PC-3 (cell line): ENCODE measurements at regions of chr10 and their contacts with region 1.

Region 1: GRCh38 chr10:22042557-22043326 is 39.2 kb upstream of the DNAJC1 start:
- DNase-seq: no peak
- ATAC-seq: no peak
- H3K4me3 ChIP-seq: no peak overlapping the region
- H3K27ac ChIP-seq: no peak overlapping the region
- H3K4me1 ChIP-seq: no peaks in the 10 kb centered on the region
- H3K27me3 ChIP-seq: no peaks in the 10 kb centered on the region
- CTCF ChIP-seq: no peak

Region 2: DNA sequence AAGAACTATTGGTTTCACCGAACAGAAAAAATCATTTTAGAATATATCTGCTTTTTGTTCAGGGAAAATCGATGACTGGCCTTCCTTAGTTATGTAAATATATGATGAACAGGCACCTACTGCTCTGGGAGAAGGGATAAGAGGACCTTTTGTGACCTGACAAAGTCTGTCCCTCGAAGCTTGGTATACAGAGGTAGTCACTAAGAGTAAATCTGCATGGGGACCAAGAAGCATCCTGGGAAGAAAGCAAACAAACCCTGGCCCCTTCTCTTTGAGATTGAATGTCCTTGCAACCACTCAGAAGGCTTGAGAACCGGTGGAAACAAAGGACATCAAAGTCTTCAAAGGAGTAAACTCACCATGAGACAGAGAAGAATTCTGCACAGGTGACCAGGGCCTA is 569.6 kb before region 1 on chr10:
- CTCF ChIA-PET with region 1: no interaction called
- POLR2A ChIA-PET with region 1: interaction called, 21 read pairs
- intact Hi-C with region 1: no loop called
- DNase-seq: no peak
- ATAC-seq: no peak
- H3K4me3 ChIP-seq: no peak overlapping the region
- H3K27ac ChIP-seq: no peak overlapping the region
- H3K4me1 ChIP-seq: no peaks in the 10 kb centered on the region
- H3K27me3 ChIP-seq: no peaks in the 10 kb centered on the region
- CTCF ChIP-seq: no peak